HEK293 (cell line): ENCODE measurements at regions of chr16 and their contacts with region 1.

Region 1: GRCh38 chr16:68590201-68590994 is 51.3 kb downstream of the ZFP90 start:
- H3K4me3 ChIP-seq: no peak overlapping the region
- H3K27ac ChIP-seq: no peak overlapping the region
- H3K4me1 ChIP-seq: no peaks in the 10 kb centered on the region
- CTCF ChIP-seq: peak; percentile 90

Region 2: GRCh38 chr16:68093816-68094613 is 496.4 kb before region 1 on chr16:
- CTCF ChIA-PET with region 1: no interaction called
- POLR2A ChIA-PET with region 1: no interaction called
- H3K4me3 ChIP-seq: no peak overlapping the region
- H3K27ac ChIP-seq: no peak overlapping the region
- H3K4me1 ChIP-seq: peaks cover 28% of the 10 kb centered on the region
- CTCF ChIP-seq: no peak

Region 3: GRCh38 chr16:68627951-68628425 is 37.6 kb after region 1 on chr16:
- CTCF ChIA-PET with region 1: interaction called, 10 read pairs
- POLR2A ChIA-PET with region 1: no interaction called
- H3K4me3 ChIP-seq: no peak overlapping the region
- H3K27ac ChIP-seq: no peak overlapping the region
- H3K4me1 ChIP-seq: no peaks in the 10 kb centered on the region
- CTCF ChIP-seq: no peak

Region 4: DNA sequence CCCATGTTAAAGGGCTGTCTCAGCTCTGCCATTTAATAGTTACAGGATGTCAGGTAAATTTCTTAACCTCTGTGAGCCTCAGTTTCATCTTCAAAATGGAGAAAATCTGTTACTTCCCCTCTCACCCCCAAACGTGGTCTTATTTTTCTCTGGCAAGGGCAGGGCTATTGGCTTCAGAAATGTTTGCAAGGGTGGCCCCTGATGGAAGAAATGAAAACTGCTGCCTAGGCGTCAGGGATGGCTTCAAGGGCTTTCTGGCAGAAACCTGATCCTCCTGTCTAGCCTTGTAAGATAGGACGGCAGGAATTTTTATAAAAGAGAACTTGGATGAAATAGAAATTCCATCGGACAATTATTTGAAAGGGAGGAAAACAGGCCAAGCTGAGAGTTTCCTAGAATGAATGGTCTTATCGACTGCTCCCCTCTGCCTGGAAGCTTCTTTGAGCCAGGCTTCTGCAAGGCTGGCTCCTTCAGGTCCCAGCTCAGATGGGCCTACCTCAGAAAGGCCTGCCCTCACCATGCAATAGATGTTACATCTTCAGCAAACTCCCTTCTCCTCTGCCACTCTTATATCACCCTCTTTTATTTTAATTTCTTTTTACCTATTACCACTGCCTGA is 210.0 kb after region 1 on chr16:
- CTCF ChIA-PET with region 1: interaction called, 21 read pairs
- POLR2A ChIA-PET with region 1: no interaction called
- H3K4me3 ChIP-seq: no peak overlapping the region
- H3K27ac ChIP-seq: no peak overlapping the region
- H3K4me1 ChIP-seq: no peaks in the 10 kb centered on the region
- CTCF ChIP-seq: 0 out of 2 replicates have a peak, but pooled peaks have one; percentile 14

Region 5: DNA sequence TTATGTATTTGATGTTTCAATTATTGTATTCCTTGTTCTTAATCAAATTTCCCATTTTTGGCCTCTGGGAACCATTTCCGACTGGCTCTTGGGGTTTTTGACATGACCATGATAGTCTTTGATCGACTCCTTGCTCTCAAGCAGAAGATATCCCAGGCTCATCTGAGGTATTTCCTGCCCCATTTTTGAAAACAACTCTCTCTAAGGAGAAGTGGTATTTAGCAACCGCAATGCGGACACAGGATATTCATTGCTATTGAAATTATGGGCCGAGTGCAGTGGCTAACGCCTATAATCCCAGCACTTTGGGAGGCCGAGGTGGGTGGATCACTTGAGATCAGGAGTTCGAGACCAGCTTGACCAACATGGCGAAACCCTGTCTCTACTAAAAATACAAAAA is 258.4 kb after region 1 on chr16:
- CTCF ChIA-PET with region 1: interaction called, 19 read pairs
- POLR2A ChIA-PET with region 1: interaction called, 4 read pairs
- H3K4me3 ChIP-seq: no peak overlapping the region
- H3K27ac ChIP-seq: no peak overlapping the region
- H3K4me1 ChIP-seq: no peaks in the 10 kb centered on the region
- CTCF ChIP-seq: no peak